Dendritic cell treated with granulocyte-macrophage colony-stimulating factor and Interleukin-4, amounts not matched to agents 40 ng/mL and 50 ng/mL, for 4 days (primary cell): ENCODE measurements at regions of chr18 and their contacts with region 1.

Region 1: DNA sequence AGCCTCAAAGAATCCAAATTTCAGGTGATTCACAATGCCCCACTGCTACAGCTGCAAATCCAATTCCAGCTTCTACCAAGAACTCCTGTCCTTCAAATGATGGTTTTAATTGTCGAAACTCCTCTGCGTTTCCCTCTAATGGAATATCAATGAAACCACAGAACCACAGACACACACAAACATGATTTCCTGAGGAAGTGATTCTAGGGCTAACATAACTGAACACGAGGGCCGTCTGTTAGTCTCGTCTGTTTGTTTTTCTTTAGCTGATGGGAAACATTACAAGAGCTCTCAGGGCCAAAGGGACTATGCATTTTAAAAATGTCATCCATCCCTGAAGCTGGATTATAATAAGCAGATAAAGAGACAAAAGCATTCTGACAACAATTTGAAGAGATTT is 59.4 kb downstream of the RNF152 start:
- H3K4me3 Mint-ChIP-seq: no peak overlapping the region
- H3K27ac Mint-ChIP-seq: no peak overlapping the region
- H3K4me1 Mint-ChIP-seq: peaks cover 14% of the 10 kb centered on the region
- H3K27me3 Mint-ChIP-seq: peaks cover 77% of the 10 kb centered on the region

Region 2: DNA sequence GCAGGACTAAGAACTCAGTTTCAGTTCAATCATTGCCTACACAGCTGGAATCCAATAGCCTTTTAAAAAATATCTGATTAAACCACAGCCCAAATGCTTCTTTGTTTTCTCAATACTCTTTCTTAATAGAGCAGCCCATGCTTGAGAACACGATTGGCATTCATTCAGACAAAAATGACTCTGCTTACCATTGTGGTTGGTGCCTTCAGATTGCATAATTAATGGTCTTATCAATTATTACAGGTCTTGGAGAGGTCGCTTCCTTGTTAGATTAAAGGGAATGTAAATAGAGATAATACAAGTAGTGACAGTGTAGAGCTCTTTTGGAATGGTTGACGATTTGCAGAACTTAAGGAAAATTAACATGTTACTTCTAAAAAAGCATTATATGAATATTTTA is 47.8 kb before region 1 on chr18:
- intact Hi-C with region 1: loop called (anchors 10 kb)
- H3K4me3 Mint-ChIP-seq: no peak overlapping the region
- H3K27ac Mint-ChIP-seq: no peak overlapping the region
- H3K4me1 Mint-ChIP-seq: no peaks in the 10 kb centered on the region
- H3K27me3 Mint-ChIP-seq: peaks cover 9% of the 10 kb centered on the region

Region 3: DNA sequence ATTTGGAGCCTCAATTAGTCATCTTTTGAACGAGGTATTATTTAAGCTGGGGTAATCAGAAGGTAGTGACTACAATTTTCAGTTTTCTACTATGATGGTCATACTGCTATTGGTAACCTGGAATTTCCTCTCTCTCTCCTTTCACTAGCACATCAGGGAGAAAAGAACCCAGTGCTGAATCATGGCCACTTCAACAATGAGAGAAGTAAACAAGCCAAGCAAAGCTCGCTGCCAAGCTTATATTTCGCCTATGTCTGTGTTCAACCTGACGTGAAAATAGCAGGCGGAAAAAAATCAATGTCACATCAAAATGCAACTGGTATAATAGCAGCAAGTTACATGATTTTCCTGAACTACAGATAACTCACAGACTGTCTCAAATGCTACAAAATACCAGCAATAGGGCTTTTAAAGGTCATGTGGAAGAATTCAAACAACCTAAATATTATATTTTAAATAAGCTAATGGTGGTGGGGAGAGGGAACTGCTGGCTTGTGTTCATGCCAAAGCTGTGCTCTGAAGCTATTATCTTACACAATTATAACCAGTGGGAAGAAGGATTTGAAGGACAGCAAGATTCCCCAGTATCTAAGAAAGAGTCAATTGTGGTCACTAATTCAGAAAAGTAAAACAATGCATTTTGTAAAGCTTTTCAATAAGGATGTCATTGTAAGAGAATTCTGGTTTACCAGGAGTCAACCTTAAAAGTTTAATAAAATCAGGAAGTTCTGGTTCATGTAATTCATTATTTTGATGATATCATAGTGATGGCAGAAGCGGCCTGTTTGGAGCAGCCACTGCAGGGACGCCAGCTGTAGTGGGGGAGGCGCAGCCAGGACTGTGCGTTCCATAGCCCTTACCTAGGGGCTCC is 21.4 kb after region 1 on chr18:
- intact Hi-C with region 1: no loop called
- H3K4me3 Mint-ChIP-seq: no peak overlapping the region
- H3K27ac Mint-ChIP-seq: no peak overlapping the region
- H3K4me1 Mint-ChIP-seq: no peaks in the 10 kb centered on the region
- H3K27me3 Mint-ChIP-seq: peaks cover 27% of the 10 kb centered on the region

Region 4: DNA sequence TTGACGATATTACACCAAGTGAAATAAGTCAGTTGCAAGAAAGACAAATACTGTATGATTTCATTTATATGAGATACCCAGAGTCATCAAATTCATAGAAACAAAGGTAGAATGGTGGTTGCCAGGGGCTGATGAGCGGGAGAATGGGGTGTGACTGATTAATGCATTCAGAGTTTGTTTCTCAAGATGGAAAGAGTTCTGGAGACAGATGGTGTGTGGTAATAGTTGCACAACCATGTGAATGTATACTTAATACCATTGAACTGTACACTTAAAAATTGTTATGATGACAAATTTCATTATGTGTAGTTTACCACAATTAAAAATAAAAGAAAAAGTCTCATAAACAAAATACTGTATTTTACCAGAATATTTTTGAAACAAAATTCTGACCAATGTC is 236.2 kb after region 1 on chr18:
- intact Hi-C with region 1: no loop called
- H3K4me3 Mint-ChIP-seq: no peak overlapping the region
- H3K27ac Mint-ChIP-seq: no peak overlapping the region
- H3K4me1 Mint-ChIP-seq: peaks cover 17% of the 10 kb centered on the region
- H3K27me3 Mint-ChIP-seq: no peaks in the 10 kb centered on the region